Left lung (tissue), 14 donors: ENCODE measurements at regions of chr3 and their contacts with region 1.

Region 1: DNA sequence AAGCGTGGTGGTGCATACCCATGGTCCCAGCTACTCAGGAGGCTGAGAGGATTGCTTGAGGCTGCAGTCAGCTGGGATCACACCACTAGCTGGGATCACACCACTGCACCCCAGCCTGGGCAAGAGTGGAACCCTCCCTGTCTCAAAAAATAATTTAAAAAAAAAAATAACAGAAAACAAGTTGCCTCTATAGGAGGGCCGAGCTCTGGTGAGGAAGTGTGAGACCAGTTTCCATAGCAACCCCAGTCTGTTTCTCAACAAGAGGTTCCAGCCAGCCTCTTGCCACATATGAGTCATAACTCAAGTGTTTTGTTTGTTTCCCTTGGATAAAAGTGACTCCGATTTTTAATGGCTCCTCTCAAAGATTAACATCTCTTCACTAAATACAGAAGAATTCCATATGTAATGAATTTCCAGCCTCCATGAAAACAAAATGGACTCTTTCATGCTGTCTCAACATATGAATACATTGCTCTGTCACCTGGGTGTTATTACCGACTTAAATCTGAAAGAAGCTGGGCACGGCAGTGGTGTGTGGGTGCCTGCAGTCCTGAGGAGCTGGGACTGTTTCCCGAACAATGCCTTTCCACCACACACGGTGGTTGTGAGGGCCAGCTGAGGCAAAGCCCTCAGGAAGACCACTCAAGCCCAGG is 19.7 kb downstream of the TMEM43 start:
- DNase-seq: peak in 3 of 4 donors; percentile 80 to 97 (median 92)
- ATAC-seq: peak; percentile 81
- H3K4me3 ChIP-seq: peak overlapping the region in 1 of 2 donors; percentile 21
- H3K27ac ChIP-seq: peak overlapping the region; percentile 92 to 99
- H3K4me1 ChIP-seq: peaks cover 25 to 41% of the 10 kb centered on the region in 2 donors
- H3K27me3 ChIP-seq: no peaks in the 10 kb centered on the region
- CTCF ChIP-seq: no peak

Region 2: GRCh38 chr3:14178247-14179113 is 33.9 kb after region 1 on chr3 and contains the starts of genes LSM3 and XPC:
- intact Hi-C with region 1: loop called in 1 of 2 experiments (anchors 2 kb)
- DNase-seq: peak; percentile 97 to 99 (median 98)
- ATAC-seq: peak; percentile 100
- H3K4me3 ChIP-seq: peak within 1 kb of the TSS; percentile 72 to 74
- H3K27ac ChIP-seq: peak within 1 kb of the TSS; percentile 92 to 96
- H3K4me1 ChIP-seq: peaks cover 10 to 53% of the 10 kb centered on the region in 2 donors
- H3K27me3 ChIP-seq: no peaks in the 10 kb centered on the region
- CTCF ChIP-seq: peak in 1 of 2 donors; percentile 34
- polyA plus RNA-seq, gene LSM3: 14.9 to 16.5 (median 15.4) TPM
- polyA plus RNA-seq, gene XPC: 41.3 to 47.6 (median 44.3) TPM